ENCODE measurements at regions of chr1 and their contacts with region 1.

Region 1: DNA sequence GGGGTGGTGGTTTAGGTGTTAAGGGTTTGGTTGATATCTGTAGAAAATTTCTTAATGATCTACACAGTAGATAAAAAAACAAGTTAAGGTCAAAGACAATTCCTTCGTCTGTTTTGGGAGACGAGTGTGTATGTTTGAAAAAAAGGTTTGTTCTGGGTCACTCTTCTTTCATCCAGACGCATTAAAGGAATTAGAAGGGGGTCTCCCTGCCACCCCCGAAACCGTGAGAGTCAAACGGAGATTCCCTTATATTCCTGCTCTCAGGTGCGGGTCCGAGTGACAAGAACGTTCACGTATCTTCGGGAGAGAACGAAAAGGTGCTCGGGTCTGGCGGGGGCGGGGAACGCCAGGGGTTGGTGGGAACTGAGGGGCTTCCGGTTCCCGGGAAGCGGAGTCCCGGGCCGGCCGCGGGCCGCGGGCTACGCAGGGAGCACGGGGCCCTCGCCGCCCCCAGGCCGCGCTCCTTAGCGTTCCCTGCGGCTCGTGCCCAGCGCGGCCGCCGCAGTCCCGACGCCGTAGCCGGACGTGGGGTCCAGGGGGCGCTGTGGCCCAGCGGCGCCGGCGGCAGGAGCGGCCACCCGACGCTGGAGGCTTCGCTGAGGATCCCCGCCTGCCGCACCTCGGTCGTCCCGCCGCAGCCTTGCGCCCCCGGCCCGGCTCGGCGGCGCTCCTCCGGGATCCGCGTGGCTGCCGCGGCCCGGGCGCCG is at the start of gene ZFYVE9:
- DNase-seq: peak; percentile 49 to 83
- H3K4me3 ChIP-seq: peak within 1 kb of the TSS; percentile 77
- H3K27ac ChIP-seq: 0 out of 2 replicates have a peak within 1 kb of the TSS, but pooled peaks have one; percentile 30
- H3K4me1 ChIP-seq: peaks cover 13% of the 10 kb centered on the region; the same call in 1 of the 2 replicates
- H3K27me3 ChIP-seq: no peaks in the 10 kb centered on the region
- CTCF ChIP-seq: no peak
- total RNA-seq, gene ZFYVE9: 20.0 and 20.7 TPM in 2 replicates

Region 2: GRCh38 chr1:52111492-52111891 is 30.2 kb before region 1 on chr1:
- CTCF ChIA-PET with region 1: interaction called, 3 read pairs
- POLR2A ChIA-PET with region 1: interaction called, 39 read pairs
- intact Hi-C with region 1: no loop called
- DNase-seq: no peak
- H3K4me3 ChIP-seq: no peak overlapping the region
- H3K27ac ChIP-seq: no peak overlapping the region
- H3K4me1 ChIP-seq: no peaks in the 10 kb centered on the region
- H3K27me3 ChIP-seq: no peaks in the 10 kb centered on the region
- CTCF ChIP-seq: no peak

Region 3: GRCh38 chr1:52296345-52296744 is 154.7 kb after region 1 on chr1:
- CTCF ChIA-PET with region 1: no interaction called
- POLR2A ChIA-PET with region 1: no interaction called
- intact Hi-C with region 1: loop called (anchors 5 kb)
- DNase-seq: peak; percentile 3 to 57
- H3K4me3 ChIP-seq: no peak overlapping the region
- H3K27ac ChIP-seq: no peak overlapping the region
- H3K4me1 ChIP-seq: no peaks in the 10 kb centered on the region
- H3K27me3 ChIP-seq: no peaks in the 10 kb centered on the region
- CTCF ChIP-seq: peak; percentile 79

Measured in PC-9 (cell line).